ENCODE measurements at regions of chr2 and their contacts with region 1.

Region 1: GRCh38 chr2:161217597-161218185 is 57.5 kb downstream of the TANK start:
- DNase-seq: no peak
- ATAC-seq: no peak
- H3K4me3 Mint-ChIP-seq: no peak overlapping the region
- H3K27ac Mint-ChIP-seq: peak overlapping the region; percentile 27
- H3K4me1 Mint-ChIP-seq: peaks cover 17% of the 10 kb centered on the region
- H3K27me3 Mint-ChIP-seq: no peaks in the 10 kb centered on the region
- CTCF ChIP-seq: no peak

Region 2: DNA sequence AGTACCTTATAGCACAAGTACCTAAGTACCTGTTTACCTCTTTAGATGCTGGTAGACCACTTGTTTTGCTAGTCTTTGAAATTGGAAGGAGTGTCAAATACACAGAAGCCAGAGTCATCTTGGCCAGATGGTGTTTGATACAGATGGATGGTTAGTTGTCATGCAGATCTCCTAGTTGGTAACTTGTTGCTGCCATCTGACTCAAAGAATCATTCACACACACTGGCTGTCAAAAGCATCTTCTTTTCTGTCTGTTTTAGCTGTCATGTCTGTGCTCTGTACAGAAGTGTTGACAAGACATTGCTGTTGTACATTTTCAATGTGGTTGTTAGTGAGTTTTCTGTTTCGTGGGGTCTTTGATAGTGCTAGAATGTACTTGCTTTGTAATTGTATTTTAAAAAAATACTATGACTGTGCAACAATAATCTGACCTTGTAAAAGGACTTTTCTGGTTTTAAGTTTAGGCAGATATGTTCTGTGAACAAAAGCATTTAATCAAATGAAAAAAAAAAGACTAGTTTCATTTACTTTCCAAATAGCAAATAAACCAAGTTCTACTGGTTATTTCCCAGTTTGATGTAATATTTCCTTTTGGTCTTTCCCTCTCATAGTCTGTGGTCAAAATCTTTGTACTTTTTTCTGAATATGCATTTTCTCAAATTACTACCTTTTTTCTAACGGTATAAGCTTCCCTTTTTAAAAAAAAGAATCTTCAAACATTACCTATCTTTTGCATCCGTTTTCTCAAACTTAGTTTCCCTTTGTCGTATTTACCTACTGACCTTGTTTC is 17.6 kb before region 1 on chr2:
- CTCF ChIA-PET with region 1: no interaction called
- POLR2A ChIA-PET with region 1: no interaction called
- intact Hi-C with region 1: loop called (anchors 2 kb)
- DNase-seq: no peak
- ATAC-seq: peak; percentile 89
- H3K4me3 Mint-ChIP-seq: peak overlapping the region; percentile 63
- H3K27ac Mint-ChIP-seq: peak overlapping the region; percentile 84
- H3K4me1 Mint-ChIP-seq: peaks cover 60% of the 10 kb centered on the region
- H3K27me3 Mint-ChIP-seq: no peaks in the 10 kb centered on the region
- CTCF ChIP-seq: no peak